Heart left ventricle (tissue), 16 donors: ENCODE measurements at regions of chr3 and their contacts with region 1.

Region 1: DNA sequence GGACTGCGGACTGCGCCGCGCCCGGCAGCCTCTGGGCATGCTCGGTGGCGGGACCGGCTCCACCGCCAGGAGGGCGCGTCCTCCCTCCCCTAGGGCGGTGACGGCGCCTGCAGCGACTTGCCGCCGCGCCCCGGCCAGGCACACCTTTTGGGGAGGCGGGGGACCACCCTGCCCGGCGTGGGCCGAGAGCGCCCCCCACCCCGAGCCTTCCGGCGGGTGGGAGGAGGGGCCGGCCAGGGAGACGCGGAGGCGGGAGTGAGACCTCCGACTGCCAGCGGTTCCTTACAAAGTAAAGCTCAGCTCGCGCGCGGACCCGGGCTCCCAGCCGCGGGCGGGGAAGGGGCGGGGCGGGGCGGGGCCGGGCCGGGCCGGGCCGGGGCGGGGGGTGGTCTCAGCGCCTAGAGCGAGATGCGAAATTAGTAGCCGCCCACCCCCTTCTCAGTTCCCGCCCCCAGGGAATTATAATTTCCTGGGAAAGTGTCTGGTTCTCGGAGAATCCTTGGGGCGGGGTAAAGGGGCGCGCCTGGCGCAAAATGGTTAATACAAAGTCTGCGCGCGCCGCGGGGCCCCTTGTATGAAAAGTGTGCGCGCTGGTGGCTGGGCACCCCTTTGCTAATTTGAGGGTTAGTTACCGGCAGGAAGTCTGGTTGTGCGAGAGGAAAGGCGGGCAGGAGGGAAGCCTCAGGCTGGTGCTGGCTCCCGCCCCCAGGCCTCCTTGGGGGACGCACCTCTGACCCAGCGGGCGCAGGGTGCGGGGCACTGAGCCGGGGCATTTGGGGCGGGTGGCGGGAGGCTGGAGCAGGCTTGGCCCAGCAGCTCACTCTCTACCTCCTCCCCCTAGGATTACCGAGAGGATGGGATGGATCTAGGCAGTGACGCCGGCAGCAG is 224.8 kb upstream of the IL12A start:
- DNase-seq: peak; percentile 86 to 90 (median 89)
- ATAC-seq: peak; percentile 51 to 86 (median 72)
- H3K4me3 ChIP-seq: peak overlapping the region; percentile 57 to 96 (median 84)
- H3K27ac ChIP-seq: peak overlapping the region; percentile 91 to 100 (median 98)
- H3K4me1 ChIP-seq: peaks cover 0 to 65% (median 36%) of the 10 kb centered on the region in 12 donors
- H3K27me3 ChIP-seq: peaks cover 0 to 16% (median 0%) of the 10 kb centered on the region in 9 donors
- CTCF ChIP-seq: peak in 9 of 12 donors; percentile 8 to 50 (median 33)
- POLR2A ChIP-seq: peak in 1 of 2 donors; percentile 50

Region 2: GRCh38 chr3:159234306-159234705 is 529.5 kb before region 1 on chr3:
- intact Hi-C with region 1: no loop called
- DNase-seq: no peak
- ATAC-seq: no peak
- H3K4me3 ChIP-seq: no peak overlapping the region
- H3K27ac ChIP-seq: no peak overlapping the region
- H3K4me1 ChIP-seq: no peaks in the 10 kb centered on the region
- H3K27me3 ChIP-seq: peaks cover 0 to 6% (median 0%) of the 10 kb centered on the region in 9 donors
- CTCF ChIP-seq: no peak
- POLR2A ChIP-seq: no peak

Region 3: GRCh38 chr3:159654186-159655134 is 109.4 kb before region 1 on chr3:
- intact Hi-C with region 1: loop called in 1 of 10 experiments (anchors 10 kb)
- DNase-seq: peak in 3 of 5 donors; percentile 23 to 55 (median 51)
- ATAC-seq: peak; percentile 90 to 94 (median 92)
- H3K4me3 ChIP-seq: no peak overlapping the region
- H3K27ac ChIP-seq: peak overlapping the region in 3 of 12 donors; percentile 17 to 40 (median 26)
- H3K4me1 ChIP-seq: peaks cover 0 to 8% (median 0%) of the 10 kb centered on the region in 12 donors
- H3K27me3 ChIP-seq: no peaks in the 10 kb centered on the region
- CTCF ChIP-seq: no peak
- POLR2A ChIP-seq: no peak

Region 4: DNA sequence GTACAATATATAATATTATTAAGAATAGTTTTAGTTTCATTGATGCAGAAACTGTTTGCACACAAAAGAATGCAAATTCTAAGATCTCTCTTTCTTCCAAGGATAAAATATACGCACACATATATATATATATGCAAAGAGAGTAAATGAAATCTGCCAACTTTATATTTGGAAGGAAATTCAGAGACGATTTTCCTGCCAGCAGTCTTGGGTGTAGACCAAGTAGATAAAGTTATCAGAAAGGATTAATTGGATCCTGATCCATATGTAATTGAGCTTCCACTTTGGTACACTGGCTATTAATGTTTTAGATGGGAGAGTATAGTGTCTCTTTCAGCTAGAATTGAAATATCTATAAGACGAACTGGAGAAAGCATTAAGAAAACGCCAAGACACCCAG is 70.6 kb before region 1 on chr3:
- intact Hi-C with region 1: no loop called
- DNase-seq: no peak
- ATAC-seq: no peak
- H3K4me3 ChIP-seq: no peak overlapping the region
- H3K27ac ChIP-seq: no peak overlapping the region
- H3K4me1 ChIP-seq: no peaks in the 10 kb centered on the region
- H3K27me3 ChIP-seq: no peaks in the 10 kb centered on the region
- CTCF ChIP-seq: no peak
- POLR2A ChIP-seq: no peak

Region 5: DNA sequence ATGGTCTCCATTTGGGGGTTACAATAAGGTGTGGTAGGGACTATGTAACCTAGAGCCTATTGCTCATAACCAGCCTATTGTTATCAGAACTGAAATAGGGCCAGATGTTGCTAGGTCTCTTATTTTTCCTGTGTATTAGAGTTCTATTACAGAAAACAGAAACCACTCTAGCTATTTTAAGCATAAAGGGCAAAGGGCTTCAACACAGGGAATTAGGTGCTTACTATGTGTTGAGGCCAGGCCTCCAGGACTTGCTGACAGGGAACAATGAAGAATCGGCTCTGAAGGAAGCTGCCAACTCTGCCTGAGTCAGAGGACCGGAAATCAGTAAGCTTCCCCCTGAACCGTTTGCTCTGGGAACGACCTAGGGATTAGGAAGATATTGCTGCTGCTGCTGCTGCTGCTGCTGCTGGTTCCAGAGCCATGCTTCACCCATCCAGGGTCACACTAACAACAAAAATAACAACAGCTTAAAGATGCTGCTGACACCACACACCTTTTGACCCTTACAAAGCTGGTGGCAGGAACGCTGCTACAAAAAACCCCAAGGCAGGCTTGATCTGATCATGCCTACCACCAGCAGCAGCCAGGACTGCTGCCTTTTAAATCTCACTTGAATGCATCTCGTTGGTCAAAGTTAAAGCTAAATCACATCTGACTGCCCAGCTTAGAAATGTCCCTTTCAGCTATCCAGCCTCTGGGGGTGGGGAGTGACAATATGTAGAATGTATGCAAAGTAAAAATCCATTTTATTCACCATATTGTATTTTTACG is 52.1 kb before region 1 on chr3:
- intact Hi-C with region 1: loop called in 3 of 10 experiments (anchors 5 to 10 kb)
- DNase-seq: peak in 4 of 5 donors; percentile 52 to 76 (median 60)
- ATAC-seq: peak; percentile 88 to 99 (median 98)
- H3K4me3 ChIP-seq: no peak overlapping the region
- H3K27ac ChIP-seq: peak overlapping the region; percentile 18 to 72 (median 52)
- H3K4me1 ChIP-seq: peaks cover 0 to 14% (median 7%) of the 10 kb centered on the region in 12 donors
- H3K27me3 ChIP-seq: no peaks in the 10 kb centered on the region
- CTCF ChIP-seq: no peak
- POLR2A ChIP-seq: no peak

Region 6: GRCh38 chr3:159852821-159853505 is 89.1 kb after region 1 on chr3:
- intact Hi-C with region 1: loop called in 1 of 10 experiments (anchors 10 kb)
- DNase-seq: peak; percentile 75 to 92 (median 81)
- ATAC-seq: peak; percentile 78 to 88 (median 80)
- H3K4me3 ChIP-seq: peak overlapping the region; percentile 21 to 60 (median 50)
- H3K27ac ChIP-seq: peak overlapping the region; percentile 81 to 93 (median 88)
- H3K4me1 ChIP-seq: peaks cover 11 to 96% (median 76%) of the 10 kb centered on the region in 12 donors
- H3K27me3 ChIP-seq: no peaks in the 10 kb centered on the region
- CTCF ChIP-seq: no peak
- POLR2A ChIP-seq: peak in 1 of 2 donors; percentile 38